GM23248 (cell line): ENCODE measurements at regions of chr9 and their contacts with region 1.

Region 1: DNA sequence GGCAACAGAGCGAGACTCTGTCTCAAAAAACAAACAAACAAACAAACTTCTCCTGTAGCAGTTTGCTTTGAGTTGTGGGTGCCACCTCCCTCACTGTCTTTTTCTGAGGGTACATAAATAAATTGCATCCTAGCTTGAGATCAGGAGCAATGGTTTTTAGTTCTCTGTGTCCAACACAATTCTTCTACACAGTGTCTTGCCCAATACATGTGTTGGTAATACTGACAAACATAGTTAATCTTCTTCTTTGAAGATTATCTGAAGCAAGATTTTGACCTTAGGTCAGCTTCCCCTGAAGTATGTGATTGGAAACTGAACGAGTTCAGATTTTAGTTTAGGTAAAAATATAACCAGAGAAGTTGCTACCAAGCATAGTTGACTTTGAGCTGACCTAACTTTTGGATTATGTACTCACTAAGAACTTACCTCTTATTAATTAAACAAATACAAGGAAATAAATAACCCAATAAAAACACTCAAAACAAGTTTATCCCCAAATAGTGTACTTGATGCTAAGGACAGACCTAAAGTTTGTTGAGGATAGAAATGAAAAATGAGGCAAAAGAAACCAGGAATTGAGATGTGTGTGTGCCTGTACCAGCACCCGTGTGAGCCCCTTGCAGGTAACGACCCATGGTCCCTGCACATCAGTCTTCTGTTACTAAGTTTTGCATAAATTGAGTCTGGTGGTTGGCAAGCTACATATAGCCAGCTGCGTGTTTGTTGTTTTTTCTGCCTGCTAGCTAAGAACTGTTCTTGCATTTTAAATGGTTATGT is 16.2 kb downstream of the TJP2 start:
- DNase-seq: no peak
- H3K4me3 ChIP-seq: no peak overlapping the region
- H3K27ac ChIP-seq: no peak overlapping the region
- H3K4me1 ChIP-seq: peaks cover 18% of the 10 kb centered on the region
- H3K27me3 ChIP-seq: no peaks in the 10 kb centered on the region

Region 2: DNA sequence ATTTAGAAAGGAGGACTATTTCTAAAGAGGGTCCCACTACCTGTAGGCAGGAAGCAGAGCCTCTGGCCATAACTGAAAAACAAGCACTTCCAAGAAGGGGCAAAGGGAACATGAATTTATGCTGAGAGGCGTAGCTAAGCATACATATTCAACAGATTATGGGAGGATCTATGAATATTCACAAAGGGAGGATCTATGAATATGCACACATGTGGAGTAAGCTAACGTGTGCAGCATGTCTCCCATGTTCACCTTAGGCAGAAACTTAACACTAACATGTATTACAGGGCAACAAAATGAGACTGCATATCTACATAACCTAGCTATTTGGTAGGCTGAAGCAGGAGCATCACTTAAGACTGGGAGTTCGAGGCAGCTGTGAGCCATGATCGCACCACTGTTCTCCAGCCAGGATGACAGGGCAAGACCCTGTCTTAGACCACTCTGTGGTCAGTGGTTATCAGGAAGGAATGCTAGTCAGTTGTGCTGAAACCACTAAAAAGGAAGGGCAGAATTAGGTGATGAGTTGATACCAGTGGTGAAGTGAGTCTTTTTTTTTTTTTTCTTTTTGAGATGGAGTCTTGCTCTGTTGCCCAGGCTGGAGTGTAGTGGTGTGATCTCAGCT is 134.0 kb before region 1 on chr9:
- in situ Hi-C with region 1: loop called (anchors 5 kb)
- DNase-seq: no peak
- H3K4me3 ChIP-seq: no peak overlapping the region
- H3K27ac ChIP-seq: no peak overlapping the region
- H3K4me1 ChIP-seq: no peaks in the 10 kb centered on the region
- H3K27me3 ChIP-seq: no peaks in the 10 kb centered on the region